ENCODE measurements at regions of chr19 and their contacts with region 1.

Region 1: GRCh38 chr19:46990991-46991676 is 28.5 kb upstream of the NPAS1 start:
- DNase-seq: peak; percentile 84
- ATAC-seq: peak; percentile 69

Region 2: GRCh38 chr19:46856050-46857022 is 134.8 kb before region 1 on chr19:
- intact Hi-C with region 1: loop called (anchors 5 kb)
- DNase-seq: peak; percentile 98
- ATAC-seq: peak; percentile 65

Region 3: DNA sequence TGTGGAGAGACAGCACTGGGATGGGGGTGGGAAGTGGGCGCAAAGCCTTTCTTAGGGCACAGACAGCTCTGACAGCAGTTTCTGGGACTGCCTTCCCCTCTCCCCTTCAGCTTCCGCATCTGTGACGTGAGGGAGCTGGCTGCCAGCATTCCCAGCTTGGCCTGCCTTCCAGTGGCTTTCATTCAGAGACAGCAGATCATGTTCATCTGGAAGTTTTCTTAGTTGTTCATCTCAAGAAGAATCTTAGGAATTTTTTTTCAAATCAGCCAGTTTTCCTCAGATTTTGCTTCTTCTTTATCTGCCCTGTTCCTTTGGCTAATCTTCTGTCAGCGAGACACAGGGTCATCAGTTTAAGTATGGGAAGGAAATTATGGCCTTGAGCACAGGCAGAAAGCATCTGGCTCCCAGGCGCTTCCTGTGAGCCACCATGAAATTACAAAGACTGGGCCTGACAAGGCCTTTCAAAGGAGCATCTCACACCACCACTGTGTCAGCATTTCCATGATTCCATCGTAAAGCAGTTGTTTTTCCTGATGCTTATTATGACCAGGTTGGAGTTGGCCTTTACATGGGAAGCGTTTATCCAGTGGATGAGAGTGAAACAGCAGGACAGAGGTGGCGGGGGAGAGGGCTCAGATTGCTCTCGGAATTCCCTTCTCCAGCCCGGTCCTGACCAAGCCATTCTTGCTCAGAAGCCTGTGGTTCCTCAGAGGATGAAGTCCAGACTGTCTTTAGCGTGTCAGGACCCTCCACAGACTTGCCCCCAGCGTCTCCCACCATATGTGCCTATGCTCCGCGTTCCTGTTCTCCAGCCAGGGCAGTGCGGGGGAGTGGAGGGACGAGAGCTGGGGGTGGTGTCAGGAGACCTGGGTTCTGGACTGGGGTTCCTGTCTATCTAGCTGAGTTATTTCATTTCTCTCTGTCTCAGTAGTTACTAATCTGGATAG is 86.7 kb before region 1 on chr19:
- intact Hi-C with region 1: no loop called
- DNase-seq: peak; percentile 62
- ATAC-seq: peak; percentile 55

Region 4: GRCh38 chr19:47045867-47046470 is 54.8 kb after region 1 on chr19:
- intact Hi-C with region 1: no loop called
- DNase-seq: no peak
- ATAC-seq: no peak